ENCODE measurements at regions of chr11 and their contacts with region 1.

Region 1: DNA sequence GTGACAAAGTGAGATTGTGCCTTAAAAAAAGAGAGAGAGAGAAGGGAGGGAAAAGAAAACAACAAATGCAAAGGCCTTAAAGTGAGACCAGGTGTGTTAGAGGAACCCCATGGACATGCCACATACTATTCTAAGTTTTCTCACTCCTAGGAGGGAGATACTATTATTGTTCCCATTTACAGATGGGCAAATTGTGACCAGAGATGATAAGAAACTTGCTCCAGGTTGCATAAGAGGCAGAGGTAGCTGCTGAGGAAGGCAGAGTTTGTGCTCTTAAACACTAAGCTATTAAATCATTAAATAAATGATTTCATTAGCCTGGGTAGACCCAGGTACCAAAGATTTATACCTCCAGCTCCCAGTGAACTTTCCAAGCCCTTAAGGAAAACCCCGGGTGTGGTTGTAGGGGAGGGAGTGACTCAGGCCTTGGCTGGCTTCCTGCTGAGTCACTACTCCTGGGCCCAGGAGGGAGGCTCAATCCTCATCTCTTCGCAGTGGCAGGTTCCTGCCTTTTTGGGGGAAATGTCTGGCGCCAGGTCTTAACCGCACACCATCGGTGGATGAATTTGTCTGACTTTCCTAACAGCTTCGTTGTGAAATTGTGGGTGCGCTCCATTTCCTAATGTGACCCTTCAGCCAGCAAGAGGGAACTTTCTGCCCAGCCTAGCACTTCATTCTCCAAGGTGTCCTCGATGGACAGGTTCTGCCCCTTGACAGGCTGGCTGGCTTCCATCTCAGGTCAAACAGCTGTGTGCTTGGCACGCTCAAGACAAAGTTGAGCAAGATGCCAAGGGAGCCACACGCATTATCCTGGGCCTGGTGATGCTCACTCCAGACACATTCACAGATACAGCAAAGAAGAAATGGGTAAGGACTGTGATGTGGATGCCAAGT is 33.4 kb upstream of the PTPRJ start:
- DNase-seq: peak; percentile 95 to 98
- ATAC-seq: peak; percentile 88 to 94
- H3K4me3 ChIP-seq: no peak overlapping the region
- H3K27ac ChIP-seq: peak overlapping the region; percentile 87
- H3K4me1 ChIP-seq: peaks cover 66% of the 10 kb centered on the region
- CTCF ChIP-seq: no peak
- EP300 ChIP-seq: peak; percentile 76 to 92; a peak in 3 of 5 replicates
- POLR2A ChIP-seq: no peak
- RAD21 ChIP-seq: peak; percentile 15 to 37; a peak in 4 of 5 replicates

Region 2: GRCh38 chr11:47967577-47968425 is 20.9 kb after region 1 on chr11:
- CTCF ChIA-PET with region 1: interaction called, 14 read pairs
- POLR2A ChIA-PET with region 1: no interaction called
- DNase-seq: no peak
- ATAC-seq: peak in 1 of 2 experiments; percentile 33; a peak in 1 of 6 replicates
- H3K4me3 ChIP-seq: no peak overlapping the region
- H3K27ac ChIP-seq: peak overlapping the region in 1 of 2 experiments; percentile 19; a peak in 3 of 6 replicates
- H3K4me1 ChIP-seq: peaks cover 10% of the 10 kb centered on the region; the same call in 1 of the 3 replicates
- CTCF ChIP-seq: no peak
- EP300 ChIP-seq: no peak
- POLR2A ChIP-seq: no peak
- RAD21 ChIP-seq: no peak

Measured in A549 (cell line).